GM10248 (cell line): ENCODE measurements at regions of chr19 and their contacts with region 1.

Region 1: GRCh38 chr19:38599722-38600121 is 18.0 kb downstream of the MAP4K1 start:
- DNase-seq: no peak
- CTCF ChIP-seq: no peak

Region 2: DNA sequence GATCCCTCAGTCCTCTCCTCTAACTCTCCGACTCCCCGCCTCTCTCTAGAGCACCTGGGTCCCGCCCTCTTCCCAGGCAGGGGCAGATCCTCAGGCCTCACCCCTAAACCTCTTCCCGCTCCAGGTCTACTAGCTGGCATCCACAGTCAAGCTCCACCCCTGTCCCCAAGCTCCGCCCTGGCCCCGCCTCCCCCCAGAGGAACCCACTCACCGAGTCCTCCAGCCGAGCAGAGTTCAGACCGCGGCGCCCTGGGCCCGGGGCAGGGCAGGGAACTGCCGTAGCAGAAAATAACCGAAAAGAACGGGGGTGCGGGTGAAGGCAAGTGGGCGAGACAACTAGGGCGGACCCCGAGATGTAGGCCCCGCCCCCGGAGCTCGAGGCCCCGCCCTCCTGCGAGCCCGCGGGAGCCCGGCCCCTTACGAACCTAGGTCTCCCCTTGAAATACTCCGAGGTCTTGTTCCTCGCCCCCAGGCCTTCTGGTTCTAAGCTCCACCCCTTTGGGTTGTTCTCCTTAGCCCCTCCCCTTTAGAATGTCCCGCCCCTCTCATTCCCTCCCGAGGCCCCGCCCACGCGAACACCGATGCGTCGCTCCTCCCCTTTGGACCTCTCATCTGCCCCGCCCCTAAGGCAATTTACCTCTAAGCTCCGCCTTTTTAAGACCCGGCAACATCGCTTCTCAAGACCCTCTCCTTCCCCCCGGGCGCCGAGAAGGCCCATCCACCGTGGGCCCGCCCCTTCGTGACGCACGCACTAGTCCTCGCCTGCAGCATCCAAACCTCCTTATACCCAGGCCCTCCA is 212.0 kb before region 1 on chr19 and contains the start of gene GGN:
- CTCF ChIA-PET with region 1: no interaction called
- POLR2A ChIA-PET with region 1: no interaction called
- DNase-seq: peak; percentile 87
- CTCF ChIP-seq: no peak

Region 3: GRCh38 chr19:38527466-38528136 is 72.1 kb before region 1 on chr19:
- CTCF ChIA-PET with region 1: no interaction called
- POLR2A ChIA-PET with region 1: no interaction called
- DNase-seq: no peak
- CTCF ChIP-seq: no peak

Region 4: GRCh38 chr19:38564981-38565690 is 34.6 kb before region 1 on chr19:
- CTCF ChIA-PET with region 1: no interaction called
- POLR2A ChIA-PET with region 1: interaction called, 10 read pairs
- DNase-seq: no peak
- CTCF ChIP-seq: no peak